ENCODE measurements at regions of chr4 and their contacts with region 1.

Region 1: DNA sequence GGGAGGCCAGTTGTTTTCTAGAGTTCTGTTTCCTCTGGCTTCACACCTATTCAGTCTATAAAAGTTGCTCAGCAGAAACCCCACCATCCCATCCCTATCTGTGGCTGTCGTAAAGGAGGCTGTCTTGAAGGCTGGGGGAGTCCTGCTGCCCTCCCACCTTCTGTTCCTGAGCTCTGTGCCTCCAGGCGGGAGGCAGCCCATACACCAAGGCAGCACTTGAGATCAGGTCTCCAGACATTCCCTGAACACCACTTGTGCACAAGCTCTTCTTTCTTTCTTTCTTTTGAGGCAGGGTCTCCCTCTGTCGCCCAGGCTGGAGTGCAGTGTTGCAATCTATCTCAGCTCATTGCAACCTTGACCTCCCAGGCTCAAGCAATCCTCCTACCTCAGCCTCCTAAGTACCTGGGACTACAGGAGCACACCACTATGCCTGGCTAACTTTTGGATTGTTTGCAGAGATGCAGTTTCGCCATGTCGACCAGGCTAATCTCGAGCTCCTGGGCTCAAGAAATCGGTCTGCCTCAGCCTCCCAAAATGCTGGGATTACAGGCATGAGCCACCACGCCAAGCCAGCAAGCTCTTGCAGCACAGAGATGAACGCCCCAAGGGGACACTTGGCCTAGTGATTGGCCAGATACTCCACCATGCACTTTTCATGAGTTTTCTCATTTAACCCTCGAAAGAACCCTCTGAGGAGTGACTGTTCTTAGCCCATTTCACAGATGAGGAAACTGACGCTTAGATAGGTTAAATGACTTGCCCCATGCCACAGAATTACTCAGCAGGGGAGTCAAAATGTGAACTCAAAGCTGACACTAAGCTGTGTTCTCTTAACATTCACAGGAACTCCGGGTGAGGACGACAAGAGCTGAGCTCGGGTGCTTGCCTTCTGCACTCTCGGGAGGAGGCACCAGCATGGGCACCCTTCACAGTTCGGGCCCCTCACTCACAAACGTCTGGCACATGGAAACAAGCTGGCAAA is 55.8 kb upstream of the ENPP6 start:
- DNase-seq: peak in 1 of 3 donors; percentile 28
- ATAC-seq: no peak
- H3K4me3 ChIP-seq: no peak overlapping the region
- H3K27ac ChIP-seq: no peak overlapping the region
- H3K4me1 ChIP-seq: peaks cover 0 to 7% (median 0%) of the 10 kb centered on the region in 4 donors
- H3K27me3 ChIP-seq: no peaks in the 10 kb centered on the region
- CTCF ChIP-seq: no peak
- POLR2A ChIP-seq: no peak

Region 2: GRCh38 chr4:184515606-184516005 is 242.1 kb after region 1 on chr4:
- intact Hi-C with region 1: no loop called
- DNase-seq: no peak
- ATAC-seq: no peak
- H3K4me3 ChIP-seq: no peak overlapping the region
- H3K27ac ChIP-seq: no peak overlapping the region
- H3K4me1 ChIP-seq: no peaks in the 10 kb centered on the region
- H3K27me3 ChIP-seq: no peaks in the 10 kb centered on the region
- CTCF ChIP-seq: no peak
- POLR2A ChIP-seq: no peak

Region 3: DNA sequence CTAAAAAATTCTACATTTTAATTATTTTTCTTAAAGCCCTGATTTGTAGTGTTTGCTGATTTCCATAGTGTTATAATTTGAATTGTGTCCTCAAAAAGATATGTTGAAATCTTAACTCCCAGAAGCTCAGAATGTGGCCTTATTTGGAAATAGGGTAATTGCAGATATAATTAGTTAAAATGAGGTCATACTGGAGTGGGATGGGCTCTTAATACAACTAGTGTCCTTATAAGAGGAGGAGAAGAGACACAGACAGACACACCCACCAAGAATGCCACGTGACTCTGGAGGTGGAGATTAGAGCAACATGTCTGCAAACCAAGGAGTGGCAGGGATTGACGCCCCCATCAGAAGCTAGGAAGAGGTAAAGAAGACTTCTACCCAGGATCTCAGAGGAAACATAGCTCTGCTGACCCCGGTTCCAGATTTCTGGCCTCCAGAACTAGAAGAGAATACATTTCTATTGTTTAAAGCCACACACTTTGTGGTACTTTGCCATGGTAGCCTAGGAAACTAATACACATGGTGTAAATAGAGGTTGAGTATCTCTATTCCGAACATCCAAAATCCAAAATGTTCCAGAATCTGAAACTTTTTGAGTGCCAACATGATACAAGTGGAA is 271.4 kb after region 1 on chr4:
- intact Hi-C with region 1: loop called in 1 of 2 experiments (anchors 10 kb)
- DNase-seq: no peak
- ATAC-seq: no peak
- H3K4me3 ChIP-seq: no peak overlapping the region
- H3K27ac ChIP-seq: no peak overlapping the region
- H3K4me1 ChIP-seq: peaks cover 0 to 28% (median 4%) of the 10 kb centered on the region in 4 donors
- H3K27me3 ChIP-seq: no peaks in the 10 kb centered on the region
- CTCF ChIP-seq: no peak
- POLR2A ChIP-seq: no peak

Measured in right lobe of liver (tissue), 6 donors.